ENCODE measurements at regions of chr12 and their contacts with region 1.

Region 1: DNA sequence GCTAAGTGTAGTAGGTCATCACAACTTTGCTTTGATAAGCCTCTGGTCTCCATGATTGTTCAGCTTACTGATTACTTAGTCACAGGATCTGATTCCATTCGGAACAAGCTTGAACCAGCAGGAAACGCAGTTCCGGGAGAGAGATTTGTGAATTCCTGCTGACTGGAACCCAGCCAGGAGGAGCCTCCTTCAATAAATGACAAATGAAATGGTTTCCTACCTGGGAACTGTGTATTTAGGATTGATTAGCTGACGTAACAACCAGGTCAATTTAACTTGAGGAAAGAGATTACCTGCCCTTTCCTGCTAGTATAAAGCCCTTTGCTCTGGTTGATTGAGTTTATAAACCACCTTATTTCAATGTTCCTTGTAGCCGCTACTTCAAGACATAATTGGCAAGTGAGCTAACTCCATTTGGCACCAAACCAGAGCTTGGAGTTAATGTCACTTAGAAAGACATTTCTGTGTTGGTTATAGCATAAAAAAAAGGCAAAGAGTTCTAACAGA is 35.1 kb upstream of the KCNH3 start:
- DNase-seq: no peak
- H3K4me3 ChIP-seq: no peak overlapping the region
- CTCF ChIP-seq: no peak

Region 2: DNA sequence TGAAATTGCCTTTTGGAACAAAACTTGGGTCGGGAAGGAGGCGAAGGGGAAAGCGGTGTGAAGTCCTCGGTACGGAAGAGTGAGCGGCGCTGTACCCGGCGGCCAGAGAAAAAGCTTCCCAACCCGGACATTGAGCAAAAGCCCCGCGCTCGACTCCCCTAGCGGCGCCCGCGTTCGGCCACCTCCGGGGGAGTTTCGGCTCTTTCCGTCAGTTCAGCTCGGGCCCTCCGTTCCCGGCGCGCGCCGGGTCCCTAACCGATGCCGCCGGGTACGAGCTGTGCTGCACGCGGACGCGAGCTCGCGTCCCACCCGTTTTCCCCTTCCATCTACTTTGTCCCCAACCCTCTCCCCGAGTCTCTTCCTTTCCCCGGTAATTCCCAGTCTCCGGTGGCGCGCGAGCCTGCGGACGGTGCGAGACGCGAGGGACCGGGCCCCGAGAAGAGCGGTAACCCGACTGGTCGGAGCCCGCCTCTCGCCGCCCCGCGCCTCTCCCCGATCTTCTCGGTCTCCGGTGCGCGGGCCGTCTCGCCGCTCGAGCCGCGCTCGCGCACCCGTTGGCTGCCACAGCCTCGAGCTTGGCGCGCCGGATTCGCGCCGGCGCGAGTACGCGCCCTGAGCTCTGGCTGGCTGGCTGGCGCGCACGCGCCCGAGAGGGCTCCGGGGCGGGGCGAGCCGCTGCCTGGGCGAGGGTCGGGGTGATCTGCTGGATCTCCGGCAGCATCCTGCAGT is 136.9 kb before region 1 on chr12:
- CTCF ChIA-PET with region 1: interaction called, 1,125 read pairs
- POLR2A ChIA-PET with region 1: interaction called, 15 read pairs
- DNase-seq: peak; percentile 33
- H3K4me3 ChIP-seq: peak overlapping the region; percentile 87
- CTCF ChIP-seq: peak; percentile 34

Region 3: DNA sequence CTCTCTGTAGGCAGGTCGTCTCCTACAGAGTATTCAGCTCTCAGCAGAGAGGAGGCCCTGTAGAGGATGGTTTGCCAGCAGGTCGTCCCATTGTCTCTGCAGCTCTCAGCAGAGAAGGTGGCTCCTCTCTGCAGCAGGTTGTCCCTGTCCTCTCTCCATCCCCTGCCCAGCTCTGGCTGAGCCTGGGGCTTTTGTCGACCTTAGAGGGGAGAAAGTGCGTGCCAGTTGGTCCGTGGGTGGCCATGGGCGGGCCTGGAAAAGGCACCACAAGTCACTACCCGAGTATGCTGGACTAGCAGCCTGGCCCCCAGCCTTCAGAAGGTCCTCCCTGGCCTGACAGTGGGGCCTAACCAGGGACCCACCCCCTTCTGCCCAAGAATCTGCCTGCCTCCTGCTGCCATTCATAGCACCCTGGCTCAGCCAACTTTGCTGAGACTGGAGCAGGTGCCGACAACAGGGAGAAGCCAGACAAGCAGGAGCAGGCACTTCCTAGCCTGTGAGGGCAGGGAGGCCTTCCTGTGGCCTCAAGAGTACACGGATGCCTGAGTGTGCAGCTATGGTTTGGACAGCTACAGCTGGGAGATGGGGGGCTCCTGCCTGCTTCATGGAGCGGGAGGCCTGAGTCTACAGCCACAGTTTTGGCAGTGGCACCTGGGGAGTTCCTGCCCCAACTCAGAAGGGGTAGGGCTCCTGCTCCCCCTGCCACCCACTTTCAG is 24.6 kb before region 1 on chr12:
- CTCF ChIA-PET with region 1: no interaction called
- POLR2A ChIA-PET with region 1: no interaction called
- DNase-seq: no peak
- H3K4me3 ChIP-seq: no peak overlapping the region
- CTCF ChIP-seq: no peak

Region 4: DNA sequence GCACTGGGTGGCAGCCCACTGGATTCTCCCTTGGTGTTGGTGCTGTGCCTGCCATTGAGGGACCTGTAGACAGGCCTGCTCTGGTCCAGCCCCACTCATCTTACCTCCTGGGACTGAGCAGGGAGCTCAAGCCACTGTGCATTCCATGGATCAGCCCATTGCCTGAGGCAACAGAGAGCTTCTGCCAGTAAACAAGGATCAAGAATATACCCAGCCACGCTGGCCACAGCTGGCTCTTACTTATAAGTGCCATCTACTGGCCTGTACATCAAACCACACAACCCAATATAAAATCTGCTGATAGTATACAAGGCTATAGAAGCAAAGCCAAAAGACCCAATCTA is 106.0 kb after region 1 on chr12:
- CTCF ChIA-PET with region 1: no interaction called
- POLR2A ChIA-PET with region 1: no interaction called
- DNase-seq: no peak
- H3K4me3 ChIP-seq: no peak overlapping the region
- CTCF ChIP-seq: no peak

Measured in AG04449 (cell line).